ENCODE measurements at regions of chr12 and their contacts with region 1.

Region 1: GRCh38 chr12:52023182-52023975 is 16.6 kb downstream of the TAMALIN start:
- DNase-seq: peak; percentile 93
- H3K4me3 Mint-ChIP-seq: peak overlapping the region; percentile 86
- H3K27ac Mint-ChIP-seq: peak overlapping the region; percentile 98
- H3K4me1 Mint-ChIP-seq: peaks cover 46% of the 10 kb centered on the region
- H3K27me3 Mint-ChIP-seq: peaks cover 6% of the 10 kb centered on the region

Region 2: DNA sequence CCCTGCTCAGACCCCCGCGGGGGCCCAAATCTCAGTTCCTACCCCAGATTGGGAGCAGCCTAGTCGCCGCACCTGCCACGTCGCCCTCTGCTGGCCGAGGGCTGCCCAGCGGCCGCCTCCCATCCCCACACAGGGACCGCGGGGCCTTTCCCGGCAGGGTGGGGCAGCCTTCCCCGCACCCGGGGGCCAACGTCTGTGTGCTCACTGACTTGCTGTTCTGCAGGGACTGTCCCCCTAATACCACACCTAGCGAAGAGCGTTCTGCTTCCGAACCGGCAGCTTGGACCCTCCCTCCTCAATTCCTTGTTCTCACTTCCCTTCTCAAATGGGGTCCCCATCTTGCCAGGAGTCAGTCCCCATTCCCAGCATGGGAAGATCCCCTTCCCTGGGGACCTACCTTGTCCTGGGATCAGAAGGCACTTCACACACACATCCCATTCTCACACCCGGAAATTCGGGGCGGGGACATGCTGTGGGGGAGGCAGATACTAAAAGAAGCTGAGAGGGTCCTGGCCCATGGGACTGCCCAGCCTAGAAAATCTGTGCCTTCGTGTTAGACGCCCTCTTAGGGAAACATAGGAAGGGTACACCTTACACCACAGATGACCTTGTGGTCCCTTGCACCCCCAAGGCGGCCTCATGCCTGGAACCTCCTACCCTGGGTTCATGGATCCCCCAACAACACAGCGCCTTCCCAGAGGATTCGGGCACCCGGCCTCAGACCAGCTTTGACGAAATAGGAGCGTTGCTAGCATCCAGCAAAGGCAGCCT is 99.7 kb before region 1 on chr12:
- CTCF ChIA-PET with region 1: interaction called, 10 read pairs
- POLR2A ChIA-PET with region 1: no interaction called
- DNase-seq: peak; percentile 55
- H3K4me3 Mint-ChIP-seq: peak overlapping the region; percentile 27
- H3K27ac Mint-ChIP-seq: no peak overlapping the region
- H3K4me1 Mint-ChIP-seq: peaks cover 5% of the 10 kb centered on the region
- H3K27me3 Mint-ChIP-seq: peaks cover 8% of the 10 kb centered on the region

Region 3: DNA sequence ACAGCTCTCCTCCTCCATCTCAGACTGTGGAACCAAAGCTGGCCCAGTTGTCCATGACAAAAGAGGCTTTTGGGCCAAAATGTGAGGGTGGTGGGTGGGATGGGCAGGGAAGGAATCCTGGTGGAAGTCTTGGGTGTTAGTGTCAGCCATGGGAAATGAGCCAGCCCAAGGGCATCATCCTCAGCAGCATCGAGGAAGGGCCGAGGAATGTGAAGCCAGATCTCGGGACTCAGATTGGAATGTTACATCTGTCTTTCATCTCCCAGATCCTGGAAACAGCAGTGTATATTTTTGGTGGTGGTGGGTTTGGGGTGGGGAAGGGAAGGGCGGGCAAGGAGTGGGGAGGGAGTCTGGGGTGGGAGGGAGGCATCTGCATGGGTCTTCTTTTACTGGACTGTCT is 28.4 kb before region 1 on chr12:
- CTCF ChIA-PET with region 1: interaction called, 299 read pairs
- POLR2A ChIA-PET with region 1: interaction called, 19 read pairs
- DNase-seq: no peak
- H3K4me3 Mint-ChIP-seq: no peak overlapping the region
- H3K27ac Mint-ChIP-seq: no peak overlapping the region
- H3K4me1 Mint-ChIP-seq: peaks cover 4% of the 10 kb centered on the region
- H3K27me3 Mint-ChIP-seq: no peaks in the 10 kb centered on the region

Region 4: DNA sequence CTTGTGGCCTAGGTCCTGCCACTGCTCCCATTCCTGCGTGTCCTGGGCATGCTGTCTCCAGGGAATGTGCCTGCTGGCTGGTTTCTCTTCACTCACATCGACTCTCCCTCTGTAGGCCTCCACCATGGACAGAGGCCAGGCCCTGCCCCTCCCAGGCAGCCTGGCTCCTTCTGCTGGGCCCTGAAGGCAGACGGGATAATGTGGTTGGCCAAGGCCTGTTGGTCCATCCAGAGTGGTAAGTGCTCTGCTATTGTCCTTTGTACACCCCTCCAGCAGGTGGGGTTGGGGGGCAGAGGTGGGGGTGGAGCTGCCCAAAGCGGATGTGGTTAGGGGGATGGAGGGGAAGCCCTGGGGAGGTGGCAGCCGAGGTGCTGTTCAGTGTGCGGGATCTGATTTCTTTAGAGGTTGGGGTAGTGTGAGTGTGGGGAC is 18.3 kb after region 1 on chr12:
- CTCF ChIA-PET with region 1: interaction called, 67 read pairs
- POLR2A ChIA-PET with region 1: interaction called, 8 read pairs
- DNase-seq: peak; percentile 36
- H3K4me3 Mint-ChIP-seq: no peak overlapping the region
- H3K27ac Mint-ChIP-seq: peak overlapping the region; percentile 58
- H3K4me1 Mint-ChIP-seq: peaks cover 34% of the 10 kb centered on the region
- H3K27me3 Mint-ChIP-seq: no peaks in the 10 kb centered on the region

Region 5: DNA sequence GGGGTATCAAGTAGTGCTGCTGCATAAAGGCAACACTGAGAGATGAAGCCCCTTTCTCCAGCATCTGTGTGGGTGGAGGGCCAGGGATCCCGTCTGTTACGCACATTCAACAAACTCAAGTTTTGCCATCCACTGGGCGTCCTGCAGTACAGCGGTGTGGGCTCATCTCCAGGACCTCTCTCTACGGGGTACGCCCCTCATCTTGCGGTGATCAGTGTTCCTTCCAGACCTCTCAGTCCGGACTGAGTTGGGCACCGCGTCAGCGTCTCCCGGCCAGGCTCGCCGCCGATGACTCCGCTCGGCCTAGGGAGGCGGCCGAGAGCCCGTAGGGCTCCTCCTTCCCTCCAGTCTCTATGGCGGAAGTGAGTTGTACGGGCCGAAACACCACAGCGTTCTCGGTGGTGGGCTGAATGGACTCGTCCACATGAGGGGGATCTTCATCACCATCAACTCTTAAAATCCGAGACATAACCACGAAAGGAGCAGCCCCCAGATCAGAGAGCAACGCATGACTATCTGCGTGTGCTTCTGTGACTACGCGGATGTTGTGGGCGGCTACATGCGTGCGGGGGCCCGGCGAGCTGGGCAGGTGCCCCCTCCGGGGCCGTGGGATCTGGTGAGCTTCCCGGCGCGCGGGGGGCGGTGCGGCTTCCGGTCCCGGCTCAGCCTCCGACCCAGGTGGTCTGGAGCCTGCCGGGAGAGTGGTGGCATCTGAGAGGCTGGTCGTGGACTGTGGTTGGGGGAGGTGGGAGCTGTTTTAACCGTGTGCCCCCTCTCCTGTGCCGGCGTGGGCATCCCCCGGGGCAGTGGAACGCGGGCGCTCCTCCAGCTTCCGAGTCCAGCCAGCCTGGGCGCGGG is 46.2 kb after region 1 on chr12 and contains the start of gene ATG101:
- CTCF ChIA-PET with region 1: interaction called, 290 read pairs
- POLR2A ChIA-PET with region 1: interaction called, 83 read pairs
- DNase-seq: peak; percentile 88
- H3K4me3 Mint-ChIP-seq: peak within 1 kb of the TSS; percentile 98
- H3K27ac Mint-ChIP-seq: peak within 1 kb of the TSS; percentile 96
- H3K4me1 Mint-ChIP-seq: peaks cover 62% of the 10 kb centered on the region
- H3K27me3 Mint-ChIP-seq: peaks cover 7% of the 10 kb centered on the region
- total RNA-seq, gene ATG101: 30.5 to 30.8 TPM

Measured in activated CD4-positive, alpha-beta memory T cell treated with anti-CD3 and anti-CD28 coated beads, Interleukin-2, amount 10 ng/mL, durations not matched to agents 7 days and 5 days (primary cell).